Naive thymus-derived CD4-positive, alpha-beta T cell (primary cell): ENCODE measurements at regions of chr2 and their contacts with region 1.

Region 1: DNA sequence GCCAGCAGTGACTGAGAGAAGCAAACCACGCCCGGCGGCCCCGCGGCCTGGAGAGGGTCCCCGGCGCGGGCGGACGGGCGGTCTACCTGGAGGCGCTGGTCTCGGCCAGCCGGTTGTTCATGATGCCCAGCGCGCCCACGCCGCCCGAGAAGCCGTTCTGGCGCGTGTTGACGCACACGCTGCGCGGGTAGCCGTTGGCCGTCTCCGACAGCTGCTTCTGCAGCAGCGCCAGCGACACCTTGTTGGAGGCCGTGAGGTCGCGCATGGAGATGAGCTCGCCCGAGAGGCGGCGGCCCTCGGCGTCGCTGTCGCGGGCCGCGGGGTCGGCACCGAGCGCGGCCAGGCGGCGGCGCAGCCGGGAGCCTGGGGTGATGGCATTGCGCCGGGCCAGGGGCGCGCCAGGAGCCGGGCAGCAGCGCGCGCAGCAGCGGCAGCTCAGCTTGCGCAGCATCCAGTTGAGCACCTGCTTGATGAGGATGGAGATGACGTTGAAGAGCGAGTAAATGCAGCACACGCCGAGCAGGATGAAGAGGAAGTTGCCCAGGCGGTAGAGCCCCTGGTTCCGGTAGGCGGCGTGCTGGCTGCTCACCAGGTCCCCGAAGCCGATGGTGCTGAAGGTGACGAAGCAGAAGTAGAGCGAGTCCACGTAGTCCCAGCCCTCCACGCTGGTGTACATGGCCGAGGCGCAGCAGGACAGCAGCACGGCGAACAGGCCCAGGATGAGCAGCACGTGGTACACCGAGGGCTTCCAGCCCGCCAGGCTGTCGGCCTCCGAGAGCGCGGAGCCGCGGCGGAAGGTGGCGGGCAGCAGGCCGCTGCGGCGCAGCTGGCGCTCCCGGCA is 118.1 kb downstream of the MSH2 start:
- DNase-seq: peak; percentile 43 to 79 (median 63)
- ATAC-seq: peak; percentile 91
- H3K4me3 ChIP-seq: peak overlapping the region; percentile 74
- H3K4me3 Mint-ChIP-seq: peak overlapping the region; percentile 90 to 99 (median 95)
- H3K27ac ChIP-seq: peak overlapping the region; percentile 15
- H3K27ac Mint-ChIP-seq: peak overlapping the region; percentile 82 to 96 (median 90)
- H3K4me1 ChIP-seq: peaks cover 0 to 4% of the 10 kb centered on the region in 2 donors
- H3K4me1 Mint-ChIP-seq: peaks cover 5 to 21% (median 20%) of the 10 kb centered on the region in 7 donors
- H3K27me3 ChIP-seq: no peaks in the 10 kb centered on the region
- H3K27me3 Mint-ChIP-seq: peaks cover 0 to 4% (median 0%) of the 10 kb centered on the region in 5 donors

Region 2: DNA sequence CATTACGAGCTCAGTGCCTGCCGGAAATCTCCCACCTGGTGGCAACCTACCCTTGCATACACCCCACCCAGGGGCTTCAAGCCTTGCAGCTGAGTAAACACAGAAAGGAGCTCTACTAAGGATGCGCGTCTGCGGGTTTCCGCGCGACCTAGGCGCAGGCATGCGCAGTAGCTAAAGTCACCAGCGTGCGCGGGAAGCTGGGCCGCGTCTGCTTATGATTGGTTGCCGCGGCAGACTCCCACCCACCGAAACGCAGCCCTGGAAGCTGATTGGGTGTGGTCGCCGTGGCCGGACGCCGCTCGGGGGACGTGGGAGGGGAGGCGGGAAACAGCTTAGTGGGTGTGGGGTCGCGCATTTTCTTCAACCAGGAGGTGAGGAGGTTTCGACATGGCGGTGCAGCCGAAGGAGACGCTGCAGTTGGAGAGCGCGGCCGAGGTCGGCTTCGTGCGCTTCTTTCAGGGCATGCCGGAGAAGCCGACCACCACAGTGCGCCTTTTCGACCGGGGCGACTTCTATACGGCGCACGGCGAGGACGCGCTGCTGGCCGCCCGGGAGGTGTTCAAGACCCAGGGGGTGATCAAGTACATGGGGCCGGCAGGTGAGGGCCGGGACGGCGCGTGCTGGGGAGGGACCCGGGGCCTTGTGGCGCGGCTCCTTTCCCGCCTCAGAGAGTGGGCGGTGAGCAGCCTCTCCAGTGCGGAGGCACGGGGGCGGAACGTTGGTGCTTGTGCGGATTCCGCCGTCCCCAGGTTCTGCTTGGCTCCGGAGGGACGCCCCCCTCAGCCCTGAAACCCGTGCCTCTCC is 118.0 kb before region 1 on chr2 and contains the start of gene MSH2:
- CTCF ChIA-PET with region 1: no interaction called
- POLR2A ChIA-PET with region 1: no interaction called
- intact Hi-C with region 1: loop called (anchors 1 kb)
- DNase-seq: peak; percentile 72 to 94 (median 91)
- ATAC-seq: peak; percentile 97
- H3K4me3 ChIP-seq: peak within 1 kb of the TSS; percentile 90
- H3K4me3 Mint-ChIP-seq: peak within 1 kb of the TSS; percentile 90 to 100 (median 98)
- H3K27ac ChIP-seq: peak within 1 kb of the TSS; percentile 77
- H3K27ac Mint-ChIP-seq: peak within 1 kb of the TSS; percentile 81 to 96 (median 91)
- H3K4me1 ChIP-seq: peaks cover 9 to 12% of the 10 kb centered on the region in 2 donors
- H3K4me1 Mint-ChIP-seq: peaks cover 32 to 49% (median 40%) of the 10 kb centered on the region in 7 donors
- H3K27me3 ChIP-seq: no peaks in the 10 kb centered on the region
- H3K27me3 Mint-ChIP-seq: peaks cover 0 to 2% (median 0%) of the 10 kb centered on the region in 5 donors
- total RNA-seq, gene MSH2: 12.2 to 44.7 (median 31.4) TPM